ENCODE measurements at regions of chr6 and their contacts with region 1.

Region 1: GRCh38 chr6:76682842-76683241 is 610.4 kb upstream of the IMPG1 start:
- DNase-seq: no peak
- ATAC-seq: no peak
- H3K4me3 ChIP-seq: no peak overlapping the region
- H3K27ac ChIP-seq: no peak overlapping the region
- H3K4me1 ChIP-seq: no peaks in the 10 kb centered on the region
- H3K27me3 ChIP-seq: no peaks in the 10 kb centered on the region

Region 2: GRCh38 chr6:76877238-76877553 is 194.4 kb after region 1 on chr6:
- intact Hi-C with region 1: loop called in 2 of 4 experiments (anchors 10 kb)
- DNase-seq: no peak
- ATAC-seq: no peak
- H3K4me3 ChIP-seq: no peak overlapping the region
- H3K27ac ChIP-seq: no peak overlapping the region
- H3K4me1 ChIP-seq: no peaks in the 10 kb centered on the region
- H3K27me3 ChIP-seq: no peaks in the 10 kb centered on the region

Region 3: DNA sequence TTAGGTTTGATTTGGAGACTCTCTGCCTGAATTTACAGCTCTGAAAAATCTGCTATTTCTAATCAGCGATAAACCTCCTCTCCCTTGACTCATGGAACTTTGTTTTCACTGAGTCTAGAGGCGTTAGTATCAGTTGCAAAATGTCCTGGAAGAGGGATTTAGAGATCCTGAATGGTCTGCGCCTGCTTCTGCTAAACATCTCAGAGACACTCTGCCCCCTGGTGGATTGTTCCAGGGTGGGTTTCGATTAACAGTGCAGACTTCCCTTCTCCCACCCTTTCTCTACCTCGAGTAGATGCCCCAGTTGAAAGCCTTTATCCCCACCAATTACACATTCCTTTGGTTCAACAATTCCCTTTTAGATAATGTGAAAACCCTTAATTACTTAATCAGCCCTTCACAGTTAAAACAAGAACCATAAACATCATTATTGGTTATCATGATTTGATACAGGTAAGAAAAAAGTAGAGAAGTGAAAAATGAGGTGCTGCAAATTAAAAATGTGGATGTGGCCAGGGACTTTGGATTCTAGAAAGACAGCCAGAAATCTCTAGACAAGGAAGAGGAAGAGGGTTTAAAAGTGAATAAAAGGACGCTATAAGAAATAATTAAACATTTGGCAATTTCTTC is 775.0 kb after region 1 on chr6:
- intact Hi-C with region 1: loop called in 1 of 4 experiments (anchors 10 kb)
- DNase-seq: peak; percentile 64 to 87 (median 70)
- ATAC-seq: peak; percentile 85 to 90
- H3K4me3 ChIP-seq: no peak overlapping the region
- H3K27ac ChIP-seq: no peak overlapping the region
- H3K4me1 ChIP-seq: no peaks in the 10 kb centered on the region
- H3K27me3 ChIP-seq: no peaks in the 10 kb centered on the region

Measured in right cardiac atrium (tissue), 5 donors.